Activated T-helper 1 cell treated with anti-CD3 and anti-CD28 coated beads, Interleukin-12 subunit alpha, Interleukin-12 subunit beta, Interleukin-2, Interleukin-4 antibody, amounts not matched to agents 30 ng/mL and 10 ng/mL and 1 ng/mL, durations not matched to agents 14 hours and 24 hours and 36 hours (primary cell): ENCODE measurements at regions of chr20 and their contacts with region 1.

Region 1: GRCh38 chr20:51480507-51481270 is 61.8 kb downstream of the NFATC2 start:
- DNase-seq: peak; percentile 52
- H3K4me3 Mint-ChIP-seq: peak overlapping the region; percentile 61
- H3K27ac Mint-ChIP-seq: peak overlapping the region; percentile 84
- H3K4me1 Mint-ChIP-seq: peaks cover 94% of the 10 kb centered on the region
- H3K27me3 Mint-ChIP-seq: no peaks in the 10 kb centered on the region

Region 2: GRCh38 chr20:50980851-50981713 is 499.6 kb before region 1 on chr20:
- intact Hi-C with region 1: loop called (anchors 1 kb)
- DNase-seq: peak; percentile 30
- H3K4me3 Mint-ChIP-seq: no peak overlapping the region
- H3K27ac Mint-ChIP-seq: peak overlapping the region; percentile 93
- H3K4me1 Mint-ChIP-seq: peaks cover 16% of the 10 kb centered on the region
- H3K27me3 Mint-ChIP-seq: peaks cover 12% of the 10 kb centered on the region

Region 3: GRCh38 chr20:51272401-51272800 is 208.3 kb before region 1 on chr20:
- intact Hi-C with region 1: no loop called
- DNase-seq: no peak
- H3K4me3 Mint-ChIP-seq: no peak overlapping the region
- H3K27ac Mint-ChIP-seq: no peak overlapping the region
- H3K4me1 Mint-ChIP-seq: no peaks in the 10 kb centered on the region
- H3K27me3 Mint-ChIP-seq: peaks cover 7% of the 10 kb centered on the region

Region 4: DNA sequence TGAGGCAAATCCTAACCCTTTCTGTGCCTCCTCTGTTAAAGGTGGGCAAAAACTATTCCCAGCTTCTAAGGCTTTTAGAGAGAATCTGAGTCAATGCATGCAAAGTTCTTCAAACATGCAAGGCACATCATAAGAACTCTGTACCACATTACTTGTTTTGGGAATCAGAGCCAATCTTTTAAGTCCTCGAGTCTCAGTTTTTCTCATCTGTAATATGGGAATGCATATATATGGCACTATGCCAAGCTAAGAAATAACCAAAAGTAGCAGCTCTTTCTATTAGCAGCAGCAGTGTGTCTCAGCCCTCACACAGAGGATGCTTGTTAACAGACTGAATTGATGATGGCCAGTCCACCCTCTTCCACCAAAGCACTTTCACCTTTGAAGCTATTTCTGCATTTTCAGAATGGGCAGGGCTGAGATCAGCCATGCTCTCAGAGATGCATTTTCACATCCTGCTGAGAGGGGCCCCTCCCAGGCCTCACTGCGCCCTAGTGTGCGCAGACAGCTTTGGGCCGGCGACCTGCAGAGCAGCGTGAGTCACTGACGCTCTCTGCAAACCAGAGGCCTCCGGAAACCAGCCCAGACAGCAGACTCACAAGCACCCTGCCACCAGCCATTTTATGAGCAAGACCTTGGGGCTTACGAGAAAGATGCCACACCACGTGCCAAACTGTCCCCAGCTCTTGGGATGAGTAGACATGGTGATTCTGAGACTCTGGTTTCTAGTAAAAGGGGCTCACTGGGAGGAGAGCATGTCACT is 76.2 kb before region 1 on chr20:
- intact Hi-C with region 1: loop called (anchors 1 kb)
- DNase-seq: peak; percentile 85
- H3K4me3 Mint-ChIP-seq: peak overlapping the region; percentile 52
- H3K27ac Mint-ChIP-seq: peak overlapping the region; percentile 96
- H3K4me1 Mint-ChIP-seq: peaks cover 93% of the 10 kb centered on the region
- H3K27me3 Mint-ChIP-seq: no peaks in the 10 kb centered on the region

Region 5: DNA sequence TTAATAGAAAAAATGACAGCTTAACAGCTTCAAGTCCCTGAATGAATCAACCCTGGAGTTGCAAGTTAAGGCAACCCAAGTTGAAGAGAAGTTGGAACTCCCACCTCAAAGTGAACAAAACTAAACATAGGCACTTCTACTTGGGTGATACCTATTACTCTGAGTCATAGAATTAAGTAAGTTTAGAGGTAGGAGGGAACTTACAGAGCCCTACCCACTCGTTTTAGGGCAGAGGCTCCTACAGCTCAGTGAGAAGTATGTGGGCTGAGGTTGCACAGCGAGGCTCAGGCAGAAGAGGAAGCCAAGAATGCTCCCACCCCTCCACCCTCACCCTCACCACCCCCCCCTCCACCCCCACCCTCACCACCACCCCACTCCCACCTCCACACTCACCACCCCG is 19.6 kb after region 1 on chr20:
- intact Hi-C with region 1: loop called (anchors 1 kb)
- DNase-seq: peak; percentile 48
- H3K4me3 Mint-ChIP-seq: no peak overlapping the region
- H3K27ac Mint-ChIP-seq: peak overlapping the region; percentile 81
- H3K4me1 Mint-ChIP-seq: peaks cover 86% of the 10 kb centered on the region
- H3K27me3 Mint-ChIP-seq: no peaks in the 10 kb centered on the region

Region 6: GRCh38 chr20:51541189-51542032 is 60.7 kb after region 1 on chr20:
- intact Hi-C with region 1: loop called (anchors 1 kb)
- DNase-seq: peak; percentile 86
- H3K4me3 Mint-ChIP-seq: peak overlapping the region; percentile 100
- H3K27ac Mint-ChIP-seq: peak overlapping the region; percentile 100
- H3K4me1 Mint-ChIP-seq: peaks cover 63% of the 10 kb centered on the region
- H3K27me3 Mint-ChIP-seq: peaks cover 9% of the 10 kb centered on the region

Region 7: DNA sequence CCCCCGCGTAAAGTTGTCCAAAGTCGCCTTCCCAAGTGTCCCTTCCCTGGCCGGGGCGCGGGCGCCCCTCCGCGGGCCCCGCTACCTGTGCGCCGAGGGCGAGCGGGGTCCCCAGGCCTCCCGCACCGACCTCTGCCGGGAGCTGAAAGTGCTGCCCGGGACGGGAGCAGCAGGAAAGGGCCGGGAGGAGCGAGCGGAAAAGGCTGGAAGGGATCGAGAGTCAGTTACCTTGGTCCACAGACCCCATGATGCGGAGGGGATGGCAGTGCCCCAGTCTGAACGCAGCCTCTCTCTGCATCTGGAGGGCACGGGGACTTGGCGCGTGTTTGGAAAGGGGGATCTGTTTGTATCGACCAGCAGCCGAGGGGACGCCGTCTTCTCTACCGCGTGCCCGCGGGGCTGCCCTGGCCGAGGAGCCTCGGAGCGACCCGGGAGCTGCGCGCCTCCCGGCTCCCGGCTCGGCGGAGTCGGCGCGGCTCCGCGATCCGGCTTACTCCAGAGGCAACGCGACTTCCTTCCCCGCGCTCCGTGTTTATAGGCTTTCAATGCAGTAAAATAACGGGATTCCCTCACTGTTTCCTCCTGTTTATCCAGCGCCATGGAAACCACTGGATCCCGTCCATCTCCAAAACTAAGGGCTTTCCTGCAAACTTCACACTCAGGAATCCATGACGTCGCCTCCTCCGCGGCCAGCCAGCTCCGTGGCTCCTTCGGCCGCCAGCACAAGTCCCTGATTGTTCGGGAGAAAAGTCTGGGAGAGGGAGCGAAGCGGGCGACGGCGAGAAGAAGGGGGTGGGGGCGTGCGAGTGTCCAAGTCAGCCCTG is 81.9 kb after region 1 on chr20:
- intact Hi-C with region 1: no loop called
- DNase-seq: no peak
- H3K4me3 Mint-ChIP-seq: peak overlapping the region; percentile 56
- H3K27ac Mint-ChIP-seq: no peak overlapping the region
- H3K4me1 Mint-ChIP-seq: peaks cover 26% of the 10 kb centered on the region
- H3K27me3 Mint-ChIP-seq: peaks cover 71% of the 10 kb centered on the region

Region 8: DNA sequence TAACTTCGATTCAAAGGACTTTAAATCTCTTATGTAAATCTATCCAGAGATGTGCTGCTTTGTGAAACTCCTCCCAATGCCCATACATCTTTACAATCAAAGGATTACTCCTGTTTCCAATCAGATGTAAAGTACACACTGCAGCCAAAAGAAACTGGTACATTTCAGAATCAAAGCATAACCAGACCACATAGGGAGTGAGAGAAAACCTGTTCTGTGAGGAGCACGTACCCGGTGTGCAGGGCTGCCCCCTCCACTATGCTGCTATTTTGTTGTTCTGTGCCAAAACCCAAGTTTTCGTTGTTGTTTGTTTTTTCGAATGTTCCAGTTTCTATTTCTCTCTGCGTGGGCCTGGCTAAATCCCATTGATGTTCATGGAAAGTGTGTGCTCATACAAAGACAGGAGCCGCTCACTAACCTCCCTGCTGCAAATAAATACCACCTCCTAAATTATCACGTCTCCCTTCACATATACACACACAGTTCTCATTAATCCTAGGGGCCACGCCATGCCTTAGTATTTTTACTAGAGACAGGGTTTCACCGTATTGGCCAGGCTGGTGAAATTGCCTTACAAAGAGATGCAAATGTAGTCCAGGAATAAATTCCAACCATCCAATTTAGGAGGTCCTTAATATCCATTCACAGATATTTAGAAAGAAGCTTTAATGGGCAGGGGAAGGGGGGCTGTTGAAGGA is 234.6 kb after region 1 on chr20:
- intact Hi-C with region 1: loop called (anchors 1 kb)
- DNase-seq: no peak
- H3K4me3 Mint-ChIP-seq: peak overlapping the region; percentile 50
- H3K27ac Mint-ChIP-seq: peak overlapping the region; percentile 88
- H3K4me1 Mint-ChIP-seq: peaks cover 39% of the 10 kb centered on the region
- H3K27me3 Mint-ChIP-seq: peaks cover 5% of the 10 kb centered on the region